ENCODE measurements at regions of chr11 and their contacts with region 1.

Region 1: GRCh38 chr11:118607401-118608359 is at the start of gene PHLDB1:
- DNase-seq: peak; percentile 68
- H3K4me3 Mint-ChIP-seq: peak within 1 kb of the TSS; percentile 78
- H3K27ac Mint-ChIP-seq: no peak within 1 kb of the TSS
- H3K4me1 Mint-ChIP-seq: peaks cover 35% of the 10 kb centered on the region
- H3K27me3 Mint-ChIP-seq: peaks cover 37% of the 10 kb centered on the region
- CTCF ChIP-seq: no peak
- total RNA-seq, gene PHLDB1: 30.3 and 37.1 TPM in 2 replicates

Region 2: GRCh38 chr11:118643142-118643994 is 35.7 kb after region 1 on chr11:
- CTCF ChIA-PET with region 1: no interaction called
- intact Hi-C with region 1: no loop called
- DNase-seq: no peak
- H3K4me3 Mint-ChIP-seq: no peak overlapping the region
- H3K27ac Mint-ChIP-seq: no peak overlapping the region
- H3K4me1 Mint-ChIP-seq: peaks cover 11% of the 10 kb centered on the region
- H3K27me3 Mint-ChIP-seq: no peaks in the 10 kb centered on the region
- CTCF ChIP-seq: no peak

Region 3: DNA sequence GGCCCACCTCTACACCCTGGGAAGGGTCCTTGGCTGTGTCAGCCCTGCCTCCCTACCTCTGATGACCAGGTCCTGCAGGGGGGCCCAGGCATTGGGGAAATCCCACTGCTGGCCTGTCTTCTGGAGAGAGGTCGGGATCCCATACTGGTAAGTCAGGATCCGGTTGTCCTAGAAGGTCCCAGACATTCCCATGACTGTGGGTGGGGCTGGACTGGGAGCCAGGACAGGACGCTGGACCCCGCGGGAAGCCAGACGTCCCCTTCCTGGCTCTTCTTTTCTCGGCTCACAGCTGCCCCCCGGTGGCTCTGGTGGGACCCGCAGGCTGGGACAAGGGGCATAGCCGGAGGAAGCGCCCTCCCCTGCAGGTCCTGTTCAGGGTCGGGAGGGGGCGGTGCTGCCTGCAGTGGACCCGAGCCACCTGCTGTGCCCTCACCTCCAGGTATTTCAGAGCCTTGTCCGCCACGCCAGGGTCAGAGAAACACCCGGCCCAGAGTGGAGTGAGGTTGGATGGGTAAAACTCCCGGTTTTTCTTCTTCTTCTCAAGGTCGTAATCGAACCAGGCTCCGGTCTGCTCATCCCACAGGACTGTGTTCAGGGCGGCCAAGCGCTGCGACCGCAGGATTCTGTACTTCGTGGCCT is 51.8 kb after region 1 on chr11:
- CTCF ChIA-PET with region 1: interaction called, 4 read pairs
- intact Hi-C with region 1: loop called (anchors 5 kb)
- DNase-seq: peak; percentile 93
- H3K4me3 Mint-ChIP-seq: no peak overlapping the region
- H3K27ac Mint-ChIP-seq: no peak overlapping the region
- H3K4me1 Mint-ChIP-seq: no peaks in the 10 kb centered on the region
- H3K27me3 Mint-ChIP-seq: no peaks in the 10 kb centered on the region
- CTCF ChIP-seq: peak; percentile 80